Lower leg skin (tissue), 4 donors: ENCODE measurements at regions of chr17 and their contacts with region 1.

Region 1: DNA sequence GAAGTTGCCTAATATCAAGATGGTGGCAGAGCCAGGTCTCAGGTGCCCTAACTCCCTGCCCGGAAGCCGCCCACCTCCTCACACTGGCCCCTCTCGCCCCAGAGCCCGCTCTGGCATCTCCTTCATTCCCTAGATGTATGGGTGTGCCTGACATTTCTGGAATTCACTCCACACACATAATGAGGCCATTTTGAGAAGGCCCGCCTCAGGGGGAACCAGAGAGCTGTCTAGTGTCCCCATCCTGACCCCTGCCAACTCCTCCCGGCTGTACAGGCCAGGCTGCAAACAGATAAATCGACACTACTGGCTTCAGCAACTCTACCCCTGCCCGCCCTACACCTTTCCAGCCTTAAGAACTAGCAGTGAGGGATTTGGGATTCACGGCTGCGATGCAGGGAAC is 7.7 kb downstream of the WNT3 start:
- DNase-seq: no peak
- H3K4me3 ChIP-seq: no peak overlapping the region
- CTCF ChIP-seq: no peak
- POLR2A ChIP-seq: no peak

Region 2: DNA sequence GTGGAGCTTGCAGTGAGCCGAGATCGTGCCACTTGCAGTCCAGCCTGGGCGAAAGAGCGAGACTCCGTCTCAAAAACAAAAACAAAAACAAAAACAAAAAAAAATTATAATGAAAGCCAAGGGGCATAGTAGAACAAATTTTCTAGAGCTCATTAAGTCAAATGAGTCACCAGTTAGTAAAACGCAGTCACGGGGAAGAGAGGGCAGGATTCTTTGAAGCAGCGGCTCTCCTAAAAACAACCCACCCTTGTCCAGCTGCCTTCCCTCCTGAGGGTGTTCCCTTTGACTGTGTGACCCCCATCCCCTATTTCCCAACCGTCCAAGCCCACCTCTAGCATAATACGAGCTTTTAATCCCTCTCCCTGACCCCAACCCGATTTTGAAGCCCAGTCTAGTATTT is 855.9 kb before region 1 on chr17:
- intact Hi-C with region 1: no loop called
- DNase-seq: no peak
- H3K4me3 ChIP-seq: no peak overlapping the region
- CTCF ChIP-seq: no peak
- POLR2A ChIP-seq: no peak

Region 3: DNA sequence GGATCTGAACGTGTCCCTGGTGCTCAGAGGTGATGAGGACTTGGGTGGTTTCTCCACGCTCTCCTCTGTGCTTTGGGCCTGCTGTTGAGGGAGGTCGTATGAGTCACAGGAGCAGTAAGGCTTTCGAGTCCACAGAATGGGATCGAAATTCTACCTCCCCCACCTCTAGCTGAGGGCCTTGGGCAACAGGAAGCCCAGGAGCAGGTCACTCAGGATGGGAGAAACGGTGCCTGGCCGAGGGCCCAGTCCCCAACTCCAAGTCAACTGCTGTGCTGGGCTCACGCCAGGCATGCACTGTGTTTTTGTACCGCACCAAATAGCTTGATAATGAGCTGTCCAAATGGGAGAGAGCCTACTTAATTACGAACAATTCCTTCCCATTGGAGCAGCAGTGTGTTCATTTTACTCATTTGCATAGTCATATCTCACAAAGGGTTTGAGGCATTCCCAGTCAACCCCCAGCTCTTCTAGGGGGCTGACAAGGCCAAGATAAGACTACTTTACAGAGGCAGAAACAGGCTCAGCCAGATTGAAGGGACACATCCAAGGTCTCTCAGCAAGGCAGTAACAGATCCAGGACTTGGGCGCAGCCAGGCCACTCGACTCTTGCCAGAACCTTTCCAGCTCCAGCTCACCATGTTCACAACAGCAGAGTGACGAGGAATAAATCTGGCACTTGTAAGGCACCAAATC is 46.0 kb before region 1 on chr17:
- intact Hi-C with region 1: loop called (anchors 1 kb)
- DNase-seq: peak in 1 of 2 donors; percentile 84
- H3K4me3 ChIP-seq: no peak overlapping the region
- CTCF ChIP-seq: no peak
- POLR2A ChIP-seq: no peak